Heart right ventricle (tissue), 16 donors: ENCODE measurements at regions of chr5 and their contacts with region 1.

Region 1: DNA sequence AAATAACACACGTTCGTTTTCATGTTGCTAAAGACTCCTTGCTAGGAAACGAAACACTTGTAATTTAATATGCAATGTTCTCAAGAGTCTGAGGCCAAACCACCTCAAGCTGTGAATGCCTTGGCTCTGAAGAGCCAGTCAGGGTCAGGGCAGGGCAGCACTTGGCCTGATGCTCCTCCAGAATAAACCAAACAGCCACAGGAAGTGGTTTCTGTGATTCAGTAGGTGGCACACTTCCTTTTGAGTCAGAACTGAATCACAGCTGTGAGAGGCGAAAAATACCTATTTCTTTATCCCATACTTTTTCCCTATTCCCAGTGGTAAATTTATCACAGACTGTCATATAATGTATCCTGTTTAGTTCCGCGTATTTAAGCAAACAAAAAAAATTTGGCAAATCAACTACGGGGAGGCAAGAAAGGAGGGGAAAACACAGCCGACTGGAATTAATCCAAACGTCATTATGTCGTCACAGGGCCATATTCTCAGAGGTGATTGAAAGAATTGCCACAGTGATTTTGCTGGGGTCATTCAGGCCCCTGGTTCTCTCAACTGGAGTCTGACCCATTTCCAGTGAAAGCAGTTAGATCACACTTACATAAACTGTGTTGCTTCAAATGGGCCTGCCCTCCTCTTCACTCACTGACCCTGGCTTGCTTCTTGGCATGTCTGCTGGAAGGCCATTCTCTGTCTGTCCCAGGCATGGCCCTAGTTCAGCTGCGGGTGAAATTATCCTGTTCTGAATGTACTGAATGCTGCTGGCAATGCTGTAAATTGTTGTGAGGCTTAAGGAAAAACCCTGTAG is 71.2 kb downstream of the ARRDC3 start:
- DNase-seq: peak; percentile 41 to 56
- ATAC-seq: peak; percentile 67 to 85 (median 77)
- H3K4me3 ChIP-seq: peak overlapping the region in 1 of 10 donors; percentile 46
- H3K27ac ChIP-seq: peak overlapping the region; percentile 34 to 93 (median 74)
- H3K4me1 ChIP-seq: peaks cover 10 to 63% (median 27%) of the 10 kb centered on the region in 9 donors
- H3K27me3 ChIP-seq: no peaks in the 10 kb centered on the region
- CTCF ChIP-seq: peak in 5 of 9 donors; percentile 15 to 38 (median 20)

Region 2: DNA sequence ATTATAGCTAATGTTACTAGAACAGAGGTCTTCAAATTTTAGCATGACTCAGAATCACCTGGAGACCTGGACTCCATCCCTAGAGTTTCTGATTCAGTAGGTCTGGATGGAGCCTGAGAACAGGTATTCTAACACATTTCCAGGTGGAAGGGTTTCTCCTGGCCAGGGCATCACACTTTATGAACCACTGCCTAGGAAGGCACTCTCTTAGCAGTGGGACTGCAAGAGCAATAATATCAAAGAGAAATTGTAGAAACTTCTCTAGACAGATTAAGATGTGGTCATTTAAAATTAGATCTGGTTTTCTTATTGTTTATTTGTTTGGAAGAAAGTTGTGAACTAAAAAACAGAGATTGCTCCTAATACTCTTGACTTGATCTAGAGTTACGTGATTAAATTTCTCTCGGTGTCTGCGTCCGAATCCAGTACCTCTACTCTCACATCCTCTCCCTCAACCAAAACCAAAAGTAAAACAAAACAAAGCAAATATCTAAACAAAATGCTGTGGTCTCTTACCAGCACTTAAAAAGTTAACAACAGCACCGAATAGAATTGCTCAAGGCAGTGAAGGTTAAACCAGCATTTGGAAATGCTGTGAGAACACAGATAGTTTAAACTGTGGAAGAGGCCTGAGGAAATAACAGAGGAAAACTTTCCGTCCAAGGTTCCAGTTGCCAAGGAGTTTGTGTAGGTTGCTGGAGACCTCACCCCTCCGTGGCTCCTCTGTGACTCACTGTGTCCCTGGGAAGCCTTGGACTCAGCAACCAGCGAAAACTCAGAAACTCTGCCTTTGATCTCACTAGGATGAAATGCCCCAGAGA is 122.2 kb before region 1 on chr5:
- intact Hi-C with region 1: no loop called
- DNase-seq: peak in 1 of 2 donors; percentile 60
- ATAC-seq: peak; percentile 62 to 96 (median 88)
- H3K4me3 ChIP-seq: peak overlapping the region in 8 of 10 donors; percentile 9 to 39 (median 34)
- H3K27ac ChIP-seq: peak overlapping the region; percentile 5 to 80 (median 62)
- H3K4me1 ChIP-seq: peaks cover 0 to 24% (median 6%) of the 10 kb centered on the region in 9 donors
- H3K27me3 ChIP-seq: no peaks in the 10 kb centered on the region
- CTCF ChIP-seq: no peak

Region 3: GRCh38 chr5:91245871-91246270 is 66.0 kb before region 1 on chr5:
- intact Hi-C with region 1: loop called in 1 of 10 experiments (anchors 1 kb)
- DNase-seq: no peak
- ATAC-seq: no peak
- H3K4me3 ChIP-seq: no peak overlapping the region
- H3K27ac ChIP-seq: peak overlapping the region in 1 of 10 donors; percentile 46
- H3K4me1 ChIP-seq: peaks cover 0 to 15% (median 0%) of the 10 kb centered on the region in 9 donors
- H3K27me3 ChIP-seq: no peaks in the 10 kb centered on the region
- CTCF ChIP-seq: peak in 1 of 9 donors; percentile 8

Region 4: GRCh38 chr5:91280362-91281269 is 31.3 kb before region 1 on chr5:
- intact Hi-C with region 1: loop called in 1 of 10 experiments (anchors 2 kb)
- DNase-seq: peak; percentile 94
- ATAC-seq: peak; percentile 97 to 99 (median 98)
- H3K4me3 ChIP-seq: peak overlapping the region; percentile 32 to 69 (median 56)
- H3K27ac ChIP-seq: peak overlapping the region; percentile 78 to 95 (median 93)
- H3K4me1 ChIP-seq: peaks cover 0 to 34% (median 8%) of the 10 kb centered on the region in 9 donors
- H3K27me3 ChIP-seq: no peaks in the 10 kb centered on the region
- CTCF ChIP-seq: peak in 2 of 9 donors; percentile 20 to 25

Region 5: DNA sequence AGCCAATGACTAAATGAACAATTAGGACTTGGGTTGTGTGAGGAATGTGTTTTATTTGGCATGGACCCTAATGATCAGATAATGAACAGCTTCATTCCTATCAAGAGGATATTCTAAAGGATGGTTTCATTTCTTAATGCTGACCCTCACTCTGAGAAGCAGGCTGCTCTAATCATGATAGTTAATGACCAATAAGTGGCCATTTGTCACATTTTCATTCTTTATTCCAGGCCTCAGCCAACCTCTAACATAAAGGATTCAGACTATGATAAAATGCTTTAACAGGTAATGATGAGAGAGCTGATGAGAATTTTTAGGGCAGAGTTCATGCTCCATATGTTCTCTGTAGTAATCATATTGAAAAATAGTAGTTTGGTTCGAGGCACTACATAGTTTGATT is 372.7 kb after region 1 on chr5:
- intact Hi-C with region 1: no loop called
- DNase-seq: no peak
- ATAC-seq: no peak
- H3K4me3 ChIP-seq: no peak overlapping the region
- H3K27ac ChIP-seq: no peak overlapping the region
- H3K4me1 ChIP-seq: no peaks in the 10 kb centered on the region
- H3K27me3 ChIP-seq: no peaks in the 10 kb centered on the region
- CTCF ChIP-seq: no peak